HCT116 (cell line): ENCODE measurements at regions of chr12 and their contacts with region 1.

Region 1: GRCh38 chr12:22544038-22544979 is at the start of gene C2CD5:
- DNase-seq: peak; percentile 95
- ATAC-seq: peak; percentile 90
- H3K4me3 ChIP-seq: peak within 1 kb of the TSS; percentile 88 to 93
- H3K27ac ChIP-seq: peak within 1 kb of the TSS; percentile 86
- H3K4me1 ChIP-seq: peaks cover 3 to 18% of the 10 kb centered on the region in 2 experiments; a peak in 3 of 4 replicates
- H3K27me3 ChIP-seq: no peaks in the 10 kb centered on the region
- CTCF ChIP-seq: peak in 2 of 3 experiments; percentile 13 to 29; a peak in 2 of 6 replicates
- POLR2A ChIP-seq: no peak
- RAD21 ChIP-seq: no peak
- total RNA-seq, gene C2CD5: 22.9 TPM

Region 2: DNA sequence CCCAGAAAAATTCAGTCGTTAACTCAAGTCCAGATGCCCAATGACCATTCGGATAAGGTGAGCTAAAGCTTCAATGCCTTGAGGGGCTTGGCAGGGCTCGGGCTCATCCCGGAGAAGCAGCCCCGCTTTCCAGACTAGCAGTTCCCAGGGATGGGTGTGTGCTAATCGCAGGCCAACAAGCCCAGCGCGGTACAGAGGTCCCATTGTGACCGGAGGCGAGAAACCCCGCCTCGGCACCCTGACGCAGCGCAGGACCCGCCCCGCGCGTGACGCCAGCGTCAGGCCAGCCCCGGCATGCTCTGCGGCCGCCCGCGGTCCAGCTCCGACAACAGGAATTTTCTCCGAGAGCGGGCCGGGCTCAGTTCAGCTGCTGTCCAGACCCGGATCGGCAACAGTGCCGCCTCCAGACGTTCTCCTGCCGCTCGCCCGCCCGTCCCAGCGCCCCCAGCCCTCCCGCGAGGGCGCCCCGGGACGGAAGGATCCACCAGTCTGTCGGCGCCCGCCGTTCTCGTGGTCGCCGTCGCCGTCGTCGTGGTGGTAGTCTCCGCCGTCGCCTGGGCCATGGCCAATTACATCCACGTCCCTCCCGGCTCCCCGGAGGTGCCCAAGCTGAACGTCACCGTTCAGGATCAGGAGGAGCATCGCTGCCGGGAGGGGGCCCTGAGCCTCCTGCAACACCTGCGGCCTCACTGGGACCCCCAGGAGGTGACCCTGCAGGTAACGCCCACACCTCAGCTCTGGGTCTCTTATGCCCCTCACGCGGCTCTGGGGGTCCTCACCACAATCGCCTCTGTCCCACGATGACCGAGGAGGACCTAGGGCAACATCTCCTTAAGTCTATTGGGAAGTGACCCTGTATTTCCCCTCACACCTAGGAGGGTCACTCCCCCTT is 80.8 kb after region 1 on chr12 and contains the start of gene ETNK1:
- CTCF ChIA-PET with region 1: no interaction called
- POLR2A ChIA-PET with region 1: interaction called, 3 read pairs
- RAD21 ChIA-PET with region 1: no interaction called
- intact Hi-C with region 1: loop called (anchors 1 kb)
- DNase-seq: peak; percentile 79
- ATAC-seq: peak; percentile 98
- H3K4me3 ChIP-seq: peak within 1 kb of the TSS; percentile 70 to 86
- H3K27ac ChIP-seq: peak within 1 kb of the TSS; percentile 88
- H3K4me1 ChIP-seq: peaks cover 9 to 20% of the 10 kb centered on the region in 2 experiments; a peak in 3 of 4 replicates
- H3K27me3 ChIP-seq: no peaks in the 10 kb centered on the region
- CTCF ChIP-seq: no peak
- POLR2A ChIP-seq: peak; percentile 90
- RAD21 ChIP-seq: no peak
- total RNA-seq, gene ETNK1: 83.6 TPM

Region 3: GRCh38 chr12:22856178-22856577 is 311.9 kb after region 1 on chr12:
- CTCF ChIA-PET with region 1: no interaction called
- POLR2A ChIA-PET with region 1: no interaction called
- RAD21 ChIA-PET with region 1: no interaction called
- intact Hi-C with region 1: no loop called
- DNase-seq: peak; percentile 7
- ATAC-seq: no peak
- H3K4me3 ChIP-seq: no peak overlapping the region
- H3K27ac ChIP-seq: no peak overlapping the region
- H3K4me1 ChIP-seq: no peaks in the 10 kb centered on the region
- H3K27me3 ChIP-seq: peaks cover 17% of the 10 kb centered on the region; the same call in 1 of the 2 replicates
- CTCF ChIP-seq: peak; percentile 38 to 69 (median 40); a peak in 5 of 6 replicates
- POLR2A ChIP-seq: no peak
- RAD21 ChIP-seq: peak; percentile 61